T-cell (primary cell): ENCODE measurements at regions of chr20 and their contacts with region 1.

Region 1: GRCh38 chr20:5621305-5621704 is 128.9 kb upstream of the SHLD1 start:
- DNase-seq: no peak
- ATAC-seq: no peak
- H3K4me3 ChIP-seq: no peak overlapping the region
- H3K4me3 Mint-ChIP-seq: no peak overlapping the region
- H3K27ac ChIP-seq: no peak overlapping the region
- H3K27ac Mint-ChIP-seq: no peak overlapping the region
- H3K4me1 ChIP-seq: no peaks in the 10 kb centered on the region
- H3K4me1 Mint-ChIP-seq: no peaks in the 10 kb centered on the region
- H3K27me3 ChIP-seq: no peaks in the 10 kb centered on the region
- H3K27me3 Mint-ChIP-seq: no peaks in the 10 kb centered on the region

Region 2: DNA sequence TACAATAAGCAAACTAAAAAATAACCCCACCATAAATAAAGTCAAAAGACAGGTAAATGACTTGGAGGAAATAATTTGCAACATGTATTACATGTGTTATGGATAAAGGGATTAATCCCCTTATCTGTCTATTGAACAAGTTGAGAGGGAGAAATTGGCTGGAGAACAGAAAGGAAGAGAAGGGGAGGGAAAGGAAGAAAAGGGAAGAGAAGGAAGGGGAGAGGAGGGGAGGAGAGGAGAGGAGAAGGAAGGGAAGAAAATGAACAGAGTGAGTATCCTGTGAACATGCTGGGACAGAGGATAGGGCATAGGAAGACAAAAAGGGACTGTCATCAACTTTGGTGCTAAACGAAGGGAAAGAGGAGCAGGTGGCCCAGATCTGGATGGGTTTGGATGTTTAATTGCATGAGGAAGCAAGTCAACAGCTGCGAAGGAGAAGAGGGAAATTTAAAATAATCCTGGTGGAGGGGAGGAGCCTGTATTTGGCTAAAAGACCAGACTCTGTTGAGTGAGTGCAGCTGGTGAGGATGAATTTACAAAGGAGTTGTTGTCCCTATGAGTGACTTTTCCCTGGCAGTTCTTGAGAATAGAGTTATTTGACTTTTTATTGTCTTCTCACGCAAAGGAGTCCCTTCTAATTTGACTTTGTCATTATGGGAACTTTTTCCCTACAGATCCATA is 114.7 kb after region 1 on chr20:
- CTCF ChIA-PET with region 1: no interaction called
- POLR2A ChIA-PET with region 1: interaction called in 1 of 2 experiments, 13 read pairs
- DNase-seq: no peak
- ATAC-seq: no peak
- H3K4me3 ChIP-seq: no peak overlapping the region
- H3K4me3 Mint-ChIP-seq: peak overlapping the region in 1 of 3 donors; percentile 49
- H3K27ac ChIP-seq: peak overlapping the region; percentile 80
- H3K27ac Mint-ChIP-seq: peak overlapping the region; percentile 98 to 99
- H3K4me1 ChIP-seq: peaks cover 15 to 25% of the 10 kb centered on the region in 2 experiments
- H3K4me1 Mint-ChIP-seq: peaks cover 32 to 50% (median 35%) of the 10 kb centered on the region in 3 donors
- H3K27me3 ChIP-seq: no peaks in the 10 kb centered on the region
- H3K27me3 Mint-ChIP-seq: no peaks in the 10 kb centered on the region